Sigmoid colon (tissue), 7 donors: ENCODE measurements at regions of chr2 and their contacts with region 1.

Region 1: GRCh38 chr2:66888791-66889631 is 454.1 kb downstream of the MEIS1 start:
- DNase-seq: peak; percentile 95
- H3K4me3 ChIP-seq: no peak overlapping the region
- H3K27ac ChIP-seq: peak overlapping the region; percentile 27 to 91 (median 83)
- H3K4me1 ChIP-seq: peaks cover 0 to 68% (median 45%) of the 10 kb centered on the region in 4 donors
- H3K27me3 ChIP-seq: no peaks in the 10 kb centered on the region
- CTCF ChIP-seq: no peak
- EP300 ChIP-seq: peak; percentile 97 to 98 (median 98)
- POLR2A ChIP-seq: peak in 1 of 2 donors; percentile 4

Region 2: GRCh38 chr2:66813976-66814375 is 75.0 kb before region 1 on chr2:
- intact Hi-C with region 1: loop called (anchors 5 kb)
- DNase-seq: no peak
- H3K4me3 ChIP-seq: no peak overlapping the region
- H3K27ac ChIP-seq: peak overlapping the region; percentile 7 to 85 (median 80)
- H3K4me1 ChIP-seq: peaks cover 0 to 42% (median 13%) of the 10 kb centered on the region in 4 donors
- H3K27me3 ChIP-seq: no peaks in the 10 kb centered on the region
- CTCF ChIP-seq: no peak
- EP300 ChIP-seq: peak in 1 of 4 donors; percentile 22
- POLR2A ChIP-seq: no peak

Region 3: DNA sequence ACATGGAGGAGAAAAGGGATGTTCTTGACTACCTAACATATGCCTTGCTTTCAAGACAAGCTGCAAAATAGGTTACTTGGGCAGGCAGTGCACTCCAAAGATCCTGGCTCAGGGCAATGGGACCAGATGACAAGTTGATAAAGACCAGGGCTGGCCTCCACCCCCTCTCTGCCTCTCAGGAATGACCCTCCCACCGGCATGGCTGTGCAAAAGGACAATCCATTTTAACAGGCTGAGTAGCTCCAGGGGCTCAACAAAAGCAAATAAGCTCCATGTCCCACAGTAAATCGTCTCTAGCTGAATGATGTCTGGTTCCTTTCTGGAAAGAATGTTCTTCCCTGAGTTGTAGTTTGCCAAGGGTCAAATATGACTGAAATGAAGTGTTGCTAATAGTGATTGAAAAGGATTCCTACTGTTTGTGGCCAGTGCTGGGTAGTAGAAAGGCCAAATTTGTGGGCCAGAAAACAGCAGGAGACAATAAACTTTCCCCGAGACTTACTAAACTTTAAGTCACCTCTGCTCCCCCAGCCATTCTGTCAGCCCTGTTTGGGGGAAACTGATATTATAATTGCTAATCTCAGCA is 73.7 kb after region 1 on chr2:
- intact Hi-C with region 1: loop called (anchors 2 kb)
- DNase-seq: peak; percentile 94
- H3K4me3 ChIP-seq: no peak overlapping the region
- H3K27ac ChIP-seq: peak overlapping the region; percentile 44 to 87 (median 82)
- H3K4me1 ChIP-seq: peaks cover 0 to 51% (median 26%) of the 10 kb centered on the region in 4 donors
- H3K27me3 ChIP-seq: no peaks in the 10 kb centered on the region
- CTCF ChIP-seq: no peak
- EP300 ChIP-seq: peak; percentile 58 to 93 (median 78)
- POLR2A ChIP-seq: no peak

Region 4: DNA sequence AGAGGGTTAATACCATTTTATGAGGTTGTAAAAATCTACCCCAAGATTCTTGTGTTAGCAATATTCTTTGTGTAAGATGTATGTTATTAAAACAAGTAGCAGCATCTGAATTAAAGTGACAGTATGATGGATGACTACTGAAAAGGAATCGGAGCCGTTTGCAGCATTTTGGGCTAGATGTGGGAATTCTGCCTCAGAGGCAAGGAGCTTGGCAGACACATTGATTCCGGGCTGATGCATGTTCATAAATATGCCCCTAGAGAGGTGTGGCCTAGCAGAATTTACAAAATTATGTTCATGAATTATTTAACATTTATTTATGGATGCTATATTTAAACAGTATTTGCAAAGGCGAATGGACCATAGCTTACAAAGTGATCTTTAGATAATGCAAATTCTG is 119.1 kb after region 1 on chr2:
- intact Hi-C with region 1: no loop called
- DNase-seq: no peak
- H3K4me3 ChIP-seq: no peak overlapping the region
- H3K27ac ChIP-seq: no peak overlapping the region
- H3K4me1 ChIP-seq: peaks cover 0 to 17% (median 0%) of the 10 kb centered on the region in 4 donors
- H3K27me3 ChIP-seq: no peaks in the 10 kb centered on the region
- CTCF ChIP-seq: no peak
- EP300 ChIP-seq: no peak
- POLR2A ChIP-seq: no peak

Region 5: DNA sequence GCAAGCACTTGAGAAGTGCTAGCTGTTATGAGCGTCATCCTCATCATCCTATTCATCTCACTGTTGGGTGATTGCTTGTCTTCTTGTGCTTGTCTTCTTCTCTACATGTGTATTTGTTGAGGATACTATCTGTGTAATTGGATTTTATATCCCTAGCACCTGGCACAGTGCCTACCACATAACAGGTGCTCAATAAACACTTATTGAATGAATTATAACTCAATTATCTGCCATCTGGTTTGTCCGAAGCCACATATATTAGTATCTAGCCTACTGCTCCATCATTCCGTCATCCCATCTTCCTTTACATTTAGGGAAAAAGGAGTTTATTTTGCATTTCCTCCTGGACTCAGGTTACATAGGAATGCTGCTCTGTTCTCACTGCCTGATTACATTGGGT is 177.8 kb after region 1 on chr2:
- intact Hi-C with region 1: no loop called
- DNase-seq: no peak
- H3K4me3 ChIP-seq: no peak overlapping the region
- H3K27ac ChIP-seq: peak overlapping the region in 1 of 4 donors; percentile 72
- H3K4me1 ChIP-seq: peaks cover 0 to 16% (median 14%) of the 10 kb centered on the region in 4 donors
- H3K27me3 ChIP-seq: no peaks in the 10 kb centered on the region
- CTCF ChIP-seq: no peak
- EP300 ChIP-seq: no peak
- POLR2A ChIP-seq: no peak

Region 6: GRCh38 chr2:67215214-67216055 is 326.4 kb after region 1 on chr2:
- intact Hi-C with region 1: loop called (anchors 5 kb)
- DNase-seq: peak; percentile 89
- H3K4me3 ChIP-seq: peak overlapping the region in 1 of 4 donors; percentile 17
- H3K27ac ChIP-seq: peak overlapping the region; percentile 65 to 83 (median 74)
- H3K4me1 ChIP-seq: peaks cover 0 to 52% (median 27%) of the 10 kb centered on the region in 4 donors
- H3K27me3 ChIP-seq: no peaks in the 10 kb centered on the region
- CTCF ChIP-seq: peak; percentile 27 to 51 (median 45)
- EP300 ChIP-seq: no peak
- POLR2A ChIP-seq: no peak